ENCODE measurements at regions of chr19 and their contacts with region 1.

Region 1: DNA sequence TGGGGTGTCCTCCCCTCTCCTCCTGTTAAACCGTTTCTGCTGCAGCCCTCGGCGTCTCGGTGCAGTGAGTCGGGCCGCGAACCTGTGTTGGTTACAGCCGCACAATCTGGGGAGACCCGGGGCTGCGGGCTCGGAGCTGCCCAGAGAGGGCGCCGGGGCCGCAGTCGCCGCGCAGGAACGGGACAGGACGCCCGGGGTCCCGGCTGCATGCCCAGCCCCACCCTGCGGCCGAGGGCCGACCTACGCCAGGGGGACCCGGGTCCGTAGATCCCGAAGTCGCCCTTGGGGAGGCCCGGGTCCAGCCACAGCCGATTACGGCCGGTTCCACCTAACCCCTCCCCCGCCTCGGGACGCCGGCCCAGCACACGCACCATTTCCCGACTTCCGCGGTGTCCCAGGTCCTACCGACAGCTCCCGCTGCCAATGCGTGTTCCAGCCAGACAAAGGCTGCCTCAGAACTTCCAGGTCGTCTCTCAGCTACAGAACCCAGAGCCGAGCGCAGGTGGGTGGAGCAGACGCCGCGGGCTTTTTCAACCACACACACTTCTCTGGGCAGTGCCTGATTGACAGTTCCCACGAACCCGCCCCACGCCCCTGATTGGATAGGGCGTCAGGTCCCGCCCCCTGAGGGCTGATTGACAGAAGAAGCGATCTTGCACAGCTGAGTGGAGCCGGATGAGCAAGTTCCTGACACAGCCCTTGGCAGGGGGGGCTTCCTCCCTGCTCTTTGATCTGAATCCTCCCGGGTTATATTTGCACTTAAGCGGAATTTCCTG is at the start of gene ZNF443:
- DNase-seq: peak; percentile 100
- ATAC-seq: peak; percentile 95
- H3K4me3 ChIP-seq: peak within 1 kb of the TSS; percentile 72
- H3K27ac ChIP-seq: peak within 1 kb of the TSS; percentile 52
- H3K4me1 ChIP-seq: no peaks in the 10 kb centered on the region
- H3K27me3 ChIP-seq: no peaks in the 10 kb centered on the region
- CTCF ChIP-seq: no peak
- total RNA-seq, gene ZNF443: 3.4 and 3.7 TPM in 2 replicates

Region 2: DNA sequence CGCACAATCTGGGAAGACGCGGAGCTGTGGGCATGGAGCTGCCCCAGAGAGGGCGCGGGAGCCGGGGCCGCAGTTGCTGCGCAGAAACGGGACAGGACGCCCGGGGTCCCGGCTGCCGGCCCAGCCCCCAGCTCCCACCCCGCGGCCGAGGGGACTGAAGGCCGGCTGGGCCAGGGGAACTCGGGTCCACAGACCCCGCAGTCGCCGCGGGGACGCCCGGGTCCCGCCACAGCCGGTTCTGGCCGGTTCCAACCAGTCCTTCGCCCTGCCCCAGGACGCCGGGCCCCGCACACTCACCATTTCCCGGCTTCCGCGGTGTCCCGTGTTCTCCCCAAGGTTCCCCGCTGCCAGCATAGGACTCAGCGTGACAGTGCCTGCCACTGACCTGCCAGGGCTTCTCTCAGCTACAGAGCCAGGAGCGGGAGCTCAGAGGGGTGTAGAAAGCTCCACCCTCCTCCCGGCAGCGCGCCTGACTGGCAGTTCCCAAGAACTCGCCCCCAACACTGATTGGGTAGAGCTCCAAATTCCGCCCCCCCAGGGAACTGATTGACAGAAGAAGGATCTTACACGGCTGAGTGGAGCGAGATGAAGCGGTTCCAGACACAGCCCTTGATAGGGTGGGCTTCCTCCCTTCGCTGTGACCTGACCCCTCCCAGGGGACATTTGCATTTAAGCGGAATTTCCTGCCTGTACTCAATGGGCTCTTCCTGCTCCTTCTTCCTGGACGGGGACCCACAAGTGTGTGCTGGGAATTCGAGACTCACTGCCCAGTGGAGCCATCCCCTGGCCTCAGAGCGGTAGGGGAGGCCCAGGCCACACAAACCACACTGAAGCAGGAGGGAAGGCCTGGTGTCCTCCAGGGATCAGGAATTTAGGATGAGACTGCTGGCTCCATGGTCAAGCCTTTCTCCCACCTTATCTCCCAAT is 75.2 kb before region 1 on chr19 and contains the start of gene ZNF442:
- CTCF ChIA-PET with region 1: no interaction called
- POLR2A ChIA-PET with region 1: no interaction called
- intact Hi-C with region 1: no loop called
- DNase-seq: peak; percentile 96
- ATAC-seq: peak; percentile 97
- H3K4me3 ChIP-seq: peak within 1 kb of the TSS; percentile 82
- H3K27ac ChIP-seq: no peak within 1 kb of the TSS
- H3K4me1 ChIP-seq: no peaks in the 10 kb centered on the region; the same call in 1 of the 2 replicates
- H3K27me3 ChIP-seq: no peaks in the 10 kb centered on the region
- CTCF ChIP-seq: peak; percentile 64
- total RNA-seq, gene ZNF442: 0.63 and 1.1 TPM in 2 replicates

Region 3: DNA sequence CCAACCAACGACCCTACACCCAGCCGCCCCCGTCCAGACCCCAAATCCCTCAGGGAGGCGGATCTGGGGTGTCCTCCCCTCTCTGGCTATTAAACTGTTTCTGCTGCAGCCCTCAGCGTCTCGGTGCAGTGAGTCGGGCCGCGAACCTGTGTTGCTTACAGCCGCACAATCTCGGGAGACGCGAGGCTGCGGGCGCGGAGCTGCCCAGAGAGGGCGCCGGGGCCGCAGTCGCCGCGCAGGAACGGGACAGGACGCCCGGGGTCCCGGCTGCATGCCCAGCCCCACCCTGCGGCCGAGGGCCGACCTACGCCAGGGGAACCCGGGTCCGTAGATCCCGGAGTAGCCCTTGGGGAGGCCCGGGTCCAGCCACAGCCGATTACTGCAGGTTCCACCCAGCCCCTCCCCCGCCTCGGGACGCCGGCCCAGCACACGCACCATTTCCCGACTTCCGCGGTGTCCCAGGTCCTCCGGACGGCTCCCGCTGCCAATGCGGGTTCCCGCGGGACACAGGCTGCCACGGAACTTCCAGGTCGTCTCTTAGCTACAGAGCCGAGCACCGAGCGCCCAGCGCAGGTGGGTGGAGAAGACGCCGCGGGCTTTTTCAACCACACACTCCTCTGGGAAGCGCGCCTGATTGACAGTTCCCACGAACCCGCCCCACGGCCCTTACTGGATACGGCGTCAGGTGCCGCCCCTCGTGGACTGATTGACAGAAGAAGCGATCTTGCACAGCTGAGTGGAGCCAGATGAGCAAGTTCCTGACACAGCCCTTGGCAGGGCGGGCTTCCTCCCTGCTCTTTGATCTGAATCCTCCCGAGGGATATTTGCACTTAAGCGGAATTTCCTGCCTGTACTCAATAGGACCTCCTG is 39.9 kb before region 1 on chr19 and contains the start of gene ZNF799:
- CTCF ChIA-PET with region 1: no interaction called
- POLR2A ChIA-PET with region 1: no interaction called
- intact Hi-C with region 1: loop called (anchors 5 kb)
- DNase-seq: peak; percentile 99
- ATAC-seq: peak; percentile 96
- H3K4me3 ChIP-seq: peak within 1 kb of the TSS; percentile 92
- H3K27ac ChIP-seq: peak within 1 kb of the TSS; percentile 67
- H3K4me1 ChIP-seq: 0 out of 2 replicates have a peak, but pooled peaks cover 4% of the 10 kb centered on the region
- H3K27me3 ChIP-seq: no peaks in the 10 kb centered on the region
- CTCF ChIP-seq: 0 out of 2 replicates have a peak, but pooled peaks have one; percentile 18
- total RNA-seq, gene ZNF799: 3.8 and 5.9 TPM in 2 replicates

Region 4: DNA sequence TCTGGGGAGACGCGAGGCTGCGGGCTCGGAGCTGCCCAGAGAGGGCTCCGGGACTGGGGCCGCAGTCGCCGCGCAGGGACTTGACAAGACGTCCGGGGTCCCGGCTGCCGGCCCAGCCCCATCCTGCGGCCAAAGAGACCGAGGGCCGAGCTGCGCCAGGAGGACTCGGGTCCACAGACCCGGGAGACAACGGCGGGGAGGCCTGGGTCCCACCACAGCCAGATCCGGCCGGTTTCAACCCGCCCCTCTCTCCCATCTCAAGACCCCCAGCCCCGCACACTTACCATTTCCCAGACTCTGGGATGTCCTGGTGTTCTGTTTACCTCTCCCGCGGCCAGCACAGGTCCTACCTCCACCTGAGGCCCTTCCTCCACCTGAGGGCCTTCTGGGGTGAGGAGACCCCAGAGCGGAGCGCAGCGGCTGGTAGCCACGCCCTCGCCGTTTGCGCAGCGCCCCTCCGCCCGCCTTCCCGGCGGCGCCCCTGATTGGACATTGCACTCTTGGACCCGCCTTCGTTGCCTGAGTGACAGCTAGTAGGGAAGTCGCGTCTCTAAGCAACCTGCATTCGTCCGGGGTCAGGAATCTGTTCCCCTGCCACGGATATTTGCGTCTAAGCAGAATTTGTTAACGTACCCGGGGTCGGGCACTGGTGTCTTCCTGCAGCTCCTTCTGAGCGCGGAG is 43.8 kb after region 1 on chr19 and contains the start of gene ZNF709:
- CTCF ChIA-PET with region 1: no interaction called
- POLR2A ChIA-PET with region 1: no interaction called
- intact Hi-C with region 1: loop called (anchors 2 kb)
- DNase-seq: peak; percentile 88
- ATAC-seq: peak; percentile 98
- H3K4me3 ChIP-seq: peak within 1 kb of the TSS; percentile 93
- H3K27ac ChIP-seq: no peak within 1 kb of the TSS
- H3K4me1 ChIP-seq: 0 out of 2 replicates have a peak, but pooled peaks cover 6% of the 10 kb centered on the region
- H3K27me3 ChIP-seq: no peaks in the 10 kb centered on the region
- CTCF ChIP-seq: no peak
- total RNA-seq, gene ZNF709: 0.77 and 2.2 TPM in 2 replicates